Dendritic cell treated with granulocyte-macrophage colony-stimulating factor and Interleukin-4, amounts not matched to agents 40 ng/mL and 50 ng/mL, for 4 days (primary cell): ENCODE measurements at regions of chrX and their contacts with region 1.

Region 1: DNA sequence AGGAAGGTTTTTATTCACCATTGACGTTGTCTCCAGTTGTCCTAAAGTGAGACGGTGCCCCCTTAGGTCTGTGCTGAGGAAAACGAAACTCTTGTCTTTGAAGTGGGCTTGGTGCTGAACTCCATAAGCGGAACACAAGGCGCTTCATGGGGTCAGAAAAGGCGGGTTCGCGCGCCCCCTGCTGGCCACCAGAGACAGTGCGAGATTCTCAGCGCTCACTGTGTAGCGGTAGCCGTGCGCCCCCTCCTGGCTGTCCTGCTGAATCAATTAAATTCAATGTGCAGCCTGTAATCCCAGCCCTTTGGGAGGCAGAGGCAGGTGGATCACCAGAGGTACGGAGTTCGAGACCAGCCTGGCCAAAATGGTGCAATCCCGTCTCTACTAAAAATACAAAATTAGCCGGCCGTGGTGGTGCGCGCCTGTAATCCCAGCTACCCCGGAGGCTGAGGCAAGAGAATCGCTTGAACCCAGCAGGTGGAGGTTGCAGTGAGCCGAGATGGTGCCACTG is 64.1 kb downstream of the RLIM start:
- H3K4me3 Mint-ChIP-seq: peak overlapping the region; percentile 17
- H3K27ac Mint-ChIP-seq: no peak overlapping the region
- H3K4me1 Mint-ChIP-seq: no peaks in the 10 kb centered on the region
- H3K27me3 Mint-ChIP-seq: no peaks in the 10 kb centered on the region

Region 2: GRCh38 chrX:74382613-74383012 is 167.7 kb before region 1 on chrX:
- intact Hi-C with region 1: loop called (anchors 5 kb)
- H3K4me3 Mint-ChIP-seq: peak overlapping the region; percentile 60
- H3K27ac Mint-ChIP-seq: peak overlapping the region; percentile 87
- H3K4me1 Mint-ChIP-seq: peaks cover 12% of the 10 kb centered on the region
- H3K27me3 Mint-ChIP-seq: peaks cover 2% of the 10 kb centered on the region

Region 3: DNA sequence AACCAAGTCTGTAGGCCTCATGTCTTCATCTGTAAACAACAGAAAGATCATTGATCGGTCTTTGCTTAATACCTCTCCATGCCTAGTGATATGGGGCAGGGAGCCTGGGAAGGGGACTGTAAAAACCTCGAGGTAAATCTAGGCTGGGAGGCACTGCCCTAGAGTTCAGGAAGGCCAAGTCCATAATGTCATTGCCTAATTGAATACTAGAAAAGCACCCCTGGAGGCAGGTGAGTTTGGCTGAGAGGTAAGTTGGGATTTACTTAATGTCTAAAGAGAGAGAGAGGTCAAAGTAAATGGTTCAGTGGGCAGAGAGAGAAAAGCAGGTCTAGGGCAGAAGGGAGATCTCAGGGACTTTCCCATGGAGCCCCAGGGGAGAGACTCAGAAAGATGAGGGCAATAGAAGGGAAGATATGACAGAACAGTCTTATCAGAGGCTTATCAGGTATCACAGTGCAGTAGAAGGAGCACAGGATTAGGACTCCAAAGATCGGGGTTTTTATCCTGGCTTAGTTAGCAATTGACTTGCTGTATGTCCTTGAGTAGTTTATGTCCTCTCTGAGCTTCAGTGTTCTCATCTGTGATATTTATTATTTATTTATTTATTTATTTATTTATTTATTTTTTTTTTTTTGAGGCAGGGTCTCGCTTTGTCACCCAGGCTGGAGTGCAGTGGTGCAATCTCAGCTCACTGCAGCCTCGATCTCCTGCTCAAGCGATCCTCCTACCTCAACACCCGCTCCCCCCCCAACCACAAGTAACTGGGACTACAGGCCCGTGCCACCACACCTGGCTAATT is 43.8 kb before region 1 on chrX:
- intact Hi-C with region 1: no loop called
- H3K4me3 Mint-ChIP-seq: no peak overlapping the region
- H3K27ac Mint-ChIP-seq: no peak overlapping the region
- H3K4me1 Mint-ChIP-seq: no peaks in the 10 kb centered on the region
- H3K27me3 Mint-ChIP-seq: no peaks in the 10 kb centered on the region

Region 4: DNA sequence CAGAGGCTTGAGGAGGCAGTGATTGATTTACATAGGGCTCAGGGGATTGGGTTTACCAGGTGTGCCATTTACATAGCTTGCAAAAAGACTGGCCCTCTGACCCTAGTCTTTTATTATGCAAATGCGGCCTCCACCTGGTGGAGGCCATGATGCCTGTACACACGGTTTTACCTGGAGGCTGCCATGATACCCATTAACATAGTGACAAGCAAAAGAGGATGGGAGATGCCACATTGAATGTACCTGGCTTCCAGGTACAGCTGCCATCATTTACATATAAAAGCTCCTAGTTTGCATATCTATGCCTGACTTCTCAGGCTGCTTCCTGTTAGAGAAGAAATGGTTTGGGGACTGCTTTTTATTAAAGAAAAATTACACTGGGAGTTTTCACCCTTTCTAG is 302.9 kb after region 1 on chrX:
- intact Hi-C with region 1: no loop called
- H3K4me3 Mint-ChIP-seq: no peak overlapping the region
- H3K27ac Mint-ChIP-seq: no peak overlapping the region
- H3K4me1 Mint-ChIP-seq: no peaks in the 10 kb centered on the region
- H3K27me3 Mint-ChIP-seq: no peaks in the 10 kb centered on the region